B cell (primary cell): ENCODE measurements at regions of chr1 and their contacts with region 1.

Region 1: GRCh38 chr1:111222308-111223125 is 5.0 kb upstream of the CHI3L2 start:
- DNase-seq: peak; percentile 83
- ATAC-seq: peak; percentile 48
- H3K4me3 ChIP-seq: peak overlapping the region in 3 of 5 experiments; percentile 3 to 26 (median 5)
- H3K4me3 Mint-ChIP-seq: peak overlapping the region; percentile 72
- H3K27ac ChIP-seq: peak overlapping the region; percentile 46 to 92
- H3K27ac Mint-ChIP-seq: peak overlapping the region; percentile 91
- H3K4me1 ChIP-seq: peaks cover 85 to 87% of the 10 kb centered on the region in 2 donors
- H3K4me1 Mint-ChIP-seq: peaks cover 82% of the 10 kb centered on the region
- H3K27me3 ChIP-seq: no peaks in the 10 kb centered on the region
- H3K27me3 Mint-ChIP-seq: no peaks in the 10 kb centered on the region
- CTCF ChIP-seq: peak; percentile 89

Region 2: DNA sequence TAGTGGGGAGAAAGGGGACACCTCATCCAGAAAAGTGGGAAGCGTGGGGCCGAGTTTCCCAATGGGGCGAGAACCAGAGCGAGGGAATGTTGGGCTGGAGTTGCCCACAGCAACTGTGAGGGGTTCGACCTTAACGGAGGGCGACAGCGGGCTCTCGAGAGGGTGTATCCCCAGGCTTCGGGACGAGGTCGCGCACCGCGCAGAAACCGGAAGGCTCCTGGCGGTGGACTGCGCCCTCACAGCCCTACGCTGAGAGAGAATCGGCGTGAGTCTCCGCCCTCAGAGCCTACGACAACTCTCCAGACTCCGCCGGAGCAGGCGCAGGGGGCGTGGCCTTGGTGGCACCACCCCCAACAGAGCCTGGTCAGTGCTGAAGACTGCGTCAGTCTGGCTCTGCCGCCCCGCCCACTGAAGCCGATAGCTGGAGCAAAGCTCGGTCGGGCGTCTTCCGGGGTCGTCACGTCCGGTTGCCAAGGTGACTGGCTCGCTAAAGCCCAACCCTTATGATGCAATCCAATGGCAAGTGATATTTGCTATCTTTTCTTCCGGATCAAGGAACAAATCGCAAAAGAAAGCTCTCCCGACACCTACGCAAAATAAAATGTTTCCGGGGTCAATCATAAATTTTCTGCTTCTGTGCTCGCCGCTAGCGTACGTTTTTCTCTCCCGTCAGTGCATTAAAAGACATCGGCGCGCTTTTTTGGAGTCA is 258.7 kb before region 1 on chr1 and contains the start of gene LRIF1:
- CTCF ChIA-PET with region 1: no interaction called
- POLR2A ChIA-PET with region 1: no interaction called
- intact Hi-C with region 1: loop called (anchors 5 kb)
- DNase-seq: peak; percentile 100
- ATAC-seq: peak; percentile 96
- H3K4me3 ChIP-seq: peak within 1 kb of the TSS; percentile 62 to 98 (median 82)
- H3K4me3 Mint-ChIP-seq: peak within 1 kb of the TSS; percentile 83
- H3K27ac ChIP-seq: peak within 1 kb of the TSS; percentile 95 to 98
- H3K27ac Mint-ChIP-seq: peak within 1 kb of the TSS; percentile 88
- H3K4me1 ChIP-seq: peaks cover 20 to 21% of the 10 kb centered on the region in 2 donors
- H3K4me1 Mint-ChIP-seq: peaks cover 30% of the 10 kb centered on the region
- H3K27me3 ChIP-seq: peaks cover 0 to 13% (median 7%) of the 10 kb centered on the region in 4 experiments
- H3K27me3 Mint-ChIP-seq: peaks cover 10% of the 10 kb centered on the region
- CTCF ChIP-seq: peak; percentile 60
- total RNA-seq, gene LRIF1: 22.6 and 26.5 TPM in 2 replicates

Region 3: DNA sequence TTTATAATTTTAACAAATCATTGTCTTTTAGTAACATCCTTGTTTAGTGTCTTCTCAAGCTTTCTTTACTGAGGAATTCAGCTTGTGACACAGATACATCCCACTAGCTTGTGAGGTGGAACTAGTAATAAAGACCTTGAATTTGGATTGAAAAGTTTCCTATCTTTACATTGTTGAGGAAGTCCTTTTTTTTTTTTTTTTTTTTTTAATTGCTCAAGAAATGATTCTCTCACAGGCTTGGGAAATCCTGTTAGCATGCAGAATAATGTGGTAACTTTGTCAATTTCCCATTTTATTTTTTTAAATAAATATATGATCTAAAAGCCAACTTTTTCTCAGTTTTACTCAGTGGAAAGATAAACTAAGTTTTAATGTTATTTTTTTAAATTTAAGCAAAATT is 37.9 kb before region 1 on chr1:
- CTCF ChIA-PET with region 1: interaction called, 8 read pairs
- POLR2A ChIA-PET with region 1: no interaction called
- intact Hi-C with region 1: loop called (anchors 5 kb)
- DNase-seq: no peak
- ATAC-seq: no peak
- H3K4me3 ChIP-seq: no peak overlapping the region
- H3K4me3 Mint-ChIP-seq: no peak overlapping the region
- H3K27ac ChIP-seq: peak overlapping the region in 1 of 2 donors; percentile 44
- H3K27ac Mint-ChIP-seq: peak overlapping the region; percentile 76
- H3K4me1 ChIP-seq: peaks cover 13 to 19% of the 10 kb centered on the region in 2 donors
- H3K4me1 Mint-ChIP-seq: peaks cover 51% of the 10 kb centered on the region
- H3K27me3 ChIP-seq: no peaks in the 10 kb centered on the region
- H3K27me3 Mint-ChIP-seq: no peaks in the 10 kb centered on the region
- CTCF ChIP-seq: no peak

Region 4: DNA sequence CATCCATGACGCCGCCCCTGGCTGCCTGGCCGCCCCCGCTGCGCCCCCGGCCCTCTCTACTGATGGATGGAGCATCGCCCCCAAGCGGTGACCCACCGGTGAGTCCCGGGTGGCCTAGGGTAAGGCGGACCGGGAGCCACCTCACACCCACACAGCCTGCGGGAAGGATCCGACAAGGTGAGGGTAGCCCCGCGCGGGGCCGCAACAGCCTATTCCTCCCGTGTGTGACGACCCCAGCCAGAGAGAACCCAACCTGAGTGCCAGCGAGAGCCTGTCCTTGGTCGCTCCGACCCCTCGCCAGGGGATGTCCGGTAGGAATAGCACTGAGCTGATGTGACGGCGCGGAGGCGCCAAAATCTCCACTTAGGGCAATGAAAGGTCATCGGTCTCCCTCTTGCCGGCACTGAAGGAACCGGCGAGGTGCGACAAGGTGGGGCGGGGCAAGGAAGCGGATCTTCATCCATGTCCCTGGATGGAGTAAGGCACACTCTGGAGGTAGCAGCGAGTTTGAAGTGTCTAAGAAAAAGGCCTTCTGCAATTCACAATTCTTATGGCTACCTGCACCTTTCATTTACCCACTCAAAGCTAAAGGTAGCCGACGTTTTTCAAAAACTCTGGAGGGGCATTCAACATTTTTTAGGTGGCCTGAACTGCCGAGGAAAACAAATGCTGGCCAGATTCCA is 48.4 kb after region 1 on chr1:
- CTCF ChIA-PET with region 1: no interaction called
- POLR2A ChIA-PET with region 1: interaction called, 5 read pairs
- intact Hi-C with region 1: loop called (anchors 2 kb)
- DNase-seq: peak; percentile 45
- ATAC-seq: peak; percentile 14
- H3K4me3 ChIP-seq: peak overlapping the region in 4 of 5 experiments; percentile 18 to 57 (median 34)
- H3K4me3 Mint-ChIP-seq: peak overlapping the region; percentile 81
- H3K27ac ChIP-seq: no peak overlapping the region
- H3K27ac Mint-ChIP-seq: no peak overlapping the region
- H3K4me1 ChIP-seq: peaks cover 21 to 22% of the 10 kb centered on the region in 2 donors
- H3K4me1 Mint-ChIP-seq: peaks cover 21% of the 10 kb centered on the region
- H3K27me3 ChIP-seq: peaks cover 0 to 34% (median 27%) of the 10 kb centered on the region in 4 experiments
- H3K27me3 Mint-ChIP-seq: peaks cover 47% of the 10 kb centered on the region
- CTCF ChIP-seq: no peak

Region 5: DNA sequence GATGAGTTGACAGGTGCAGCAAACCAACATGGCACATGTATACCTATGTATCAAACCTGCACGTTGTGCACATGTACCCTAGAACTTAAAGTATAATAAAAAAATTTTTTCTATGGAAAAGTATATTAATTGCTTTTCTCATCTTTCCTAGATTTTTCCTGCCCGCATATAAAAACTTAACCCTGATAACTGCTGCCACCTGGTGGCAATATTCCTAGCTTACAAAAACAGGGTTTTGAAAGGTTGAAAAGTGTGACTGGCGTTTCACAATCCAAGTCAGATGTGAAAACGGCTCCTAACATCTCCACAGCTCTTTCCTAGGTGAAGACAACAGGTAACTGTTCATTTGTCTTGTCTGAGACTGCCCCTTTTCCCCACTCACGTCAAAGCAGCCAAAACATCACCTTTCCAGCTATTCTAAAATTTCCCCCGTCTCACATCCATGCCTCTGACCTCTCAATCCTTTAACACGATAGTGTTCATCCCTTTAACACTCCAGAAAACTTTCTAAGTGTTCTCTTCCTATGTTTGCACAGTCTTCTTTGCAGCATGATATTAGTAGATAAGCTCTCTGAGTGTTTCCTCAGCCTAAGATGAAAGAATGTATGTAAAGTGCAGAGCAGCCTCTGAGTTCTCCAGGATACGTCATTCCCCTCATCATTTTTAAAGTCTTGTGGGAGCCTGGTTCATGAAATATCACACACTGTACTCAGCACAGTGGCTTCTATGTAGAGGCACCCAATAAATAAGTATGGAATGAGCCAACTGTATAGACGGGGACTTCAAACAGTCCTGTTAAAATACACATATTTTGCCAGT is 177.5 kb after region 1 on chr1:
- CTCF ChIA-PET with region 1: interaction called, 62 read pairs
- POLR2A ChIA-PET with region 1: no interaction called
- intact Hi-C with region 1: loop called (anchors 1 kb)
- DNase-seq: peak; percentile 61
- ATAC-seq: no peak
- H3K4me3 ChIP-seq: no peak overlapping the region
- H3K4me3 Mint-ChIP-seq: no peak overlapping the region
- H3K27ac ChIP-seq: no peak overlapping the region
- H3K27ac Mint-ChIP-seq: peak overlapping the region; percentile 8
- H3K4me1 ChIP-seq: peaks cover 12 to 15% of the 10 kb centered on the region in 2 donors
- H3K4me1 Mint-ChIP-seq: peaks cover 24% of the 10 kb centered on the region
- H3K27me3 ChIP-seq: no peaks in the 10 kb centered on the region
- H3K27me3 Mint-ChIP-seq: no peaks in the 10 kb centered on the region
- CTCF ChIP-seq: peak; percentile 70

Region 6: DNA sequence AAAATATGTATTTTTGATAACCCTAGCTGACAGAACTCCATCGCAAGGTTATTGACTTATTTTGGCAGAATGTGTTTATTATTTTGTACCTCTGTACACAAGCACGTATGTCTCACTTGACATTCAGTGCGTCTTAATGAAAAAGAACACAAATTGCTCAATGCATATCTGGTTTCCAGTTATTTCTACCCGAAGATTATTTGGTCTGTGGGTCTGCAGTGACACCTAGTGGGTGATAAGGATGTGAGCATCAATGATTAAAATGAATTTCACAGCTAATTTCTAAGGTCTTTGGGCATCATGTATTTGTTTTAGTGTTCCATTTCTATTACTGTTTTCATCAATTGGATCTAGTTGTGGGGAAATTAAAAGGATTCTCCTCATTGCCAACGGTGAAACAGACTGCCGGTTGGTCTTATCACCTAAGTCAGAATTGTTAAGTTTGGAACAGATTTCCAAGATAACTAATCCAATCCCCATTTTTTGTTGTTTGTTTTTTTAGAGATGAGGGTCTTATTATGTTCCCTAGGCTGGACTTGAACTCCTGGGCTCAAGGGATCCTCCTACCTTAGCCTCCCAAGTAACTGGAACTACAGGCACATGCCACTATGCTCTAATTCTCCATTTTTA is 547.1 kb after region 1 on chr1:
- CTCF ChIA-PET with region 1: interaction called, 5 read pairs
- POLR2A ChIA-PET with region 1: no interaction called
- intact Hi-C with region 1: loop called (anchors 10 kb)
- DNase-seq: peak; percentile 78
- ATAC-seq: peak; percentile 51
- H3K4me3 ChIP-seq: no peak overlapping the region
- H3K4me3 Mint-ChIP-seq: no peak overlapping the region
- H3K27ac ChIP-seq: no peak overlapping the region
- H3K27ac Mint-ChIP-seq: no peak overlapping the region
- H3K4me1 ChIP-seq: no peaks in the 10 kb centered on the region
- H3K4me1 Mint-ChIP-seq: no peaks in the 10 kb centered on the region
- H3K27me3 ChIP-seq: no peaks in the 10 kb centered on the region
- H3K27me3 Mint-ChIP-seq: no peaks in the 10 kb centered on the region
- CTCF ChIP-seq: peak; percentile 95